ENCODE measurements at regions of chr1 and their contacts with region 1.

Region 1: DNA sequence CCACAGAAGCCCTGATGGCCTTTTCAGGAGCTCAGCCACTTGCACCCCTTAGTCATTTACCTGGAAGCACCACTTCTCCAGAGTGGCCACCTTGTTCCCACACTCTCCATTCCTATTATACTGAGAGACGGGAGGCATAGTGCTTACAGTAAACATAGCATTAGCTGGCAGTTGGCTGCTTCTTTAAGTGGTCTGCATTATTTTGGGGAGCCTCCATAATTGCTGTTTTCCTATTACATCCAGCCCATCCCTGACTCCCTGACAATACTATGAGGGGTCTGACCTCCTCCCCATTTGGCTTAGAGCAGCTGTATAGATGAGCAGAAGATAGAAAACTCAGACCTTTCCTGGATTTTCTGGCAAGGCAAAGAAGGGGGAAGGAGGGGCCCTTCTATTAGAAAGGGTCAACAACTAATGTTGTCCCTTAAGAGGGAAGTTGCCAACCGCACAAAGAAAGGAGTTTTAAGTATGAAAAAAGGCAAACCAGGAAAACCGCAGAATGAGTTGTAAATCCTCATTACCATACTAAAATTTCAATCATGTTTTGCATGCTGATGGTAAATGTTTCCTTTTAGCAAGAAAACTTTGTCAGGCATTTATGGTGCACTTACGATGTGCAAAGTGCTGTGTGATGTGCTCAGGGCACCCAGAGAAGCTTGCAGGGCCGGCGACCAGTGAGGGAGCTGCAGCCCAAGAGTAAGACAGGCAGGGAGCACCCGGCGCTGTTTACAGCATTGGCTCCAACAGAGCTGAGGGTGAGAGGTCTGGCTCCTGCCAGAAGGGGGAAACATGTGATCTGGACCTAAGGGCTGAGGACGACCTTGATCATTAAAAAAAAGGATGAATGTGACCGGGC is 167.3 kb downstream of the ZZZ3 start:
- DNase-seq: peak; percentile 68
- H3K4me3 ChIP-seq: no peak overlapping the region
- H3K27ac ChIP-seq: peak overlapping the region; percentile 74
- H3K4me1 ChIP-seq: peaks cover 32% of the 10 kb centered on the region
- H3K27me3 ChIP-seq: no peaks in the 10 kb centered on the region
- CTCF ChIP-seq: peak in 1 of 2 donors; percentile 24
- POLR2A ChIP-seq: no peak

Region 2: GRCh38 chr1:77219166-77219887 is 295.8 kb before region 1 on chr1 and contains the start of gene PIGK:
- CTCF ChIA-PET with region 1: no interaction called
- POLR2A ChIA-PET with region 1: no interaction called
- dilution Hi-C with region 1: no loop called
- intact Hi-C with region 1: loop called (anchors 5 kb)
- DNase-seq: peak; percentile 92
- H3K4me3 ChIP-seq: peak within 1 kb of the TSS; percentile 68 to 92 (median 83)
- H3K27ac ChIP-seq: peak within 1 kb of the TSS; percentile 38
- H3K4me1 ChIP-seq: peaks cover 19% of the 10 kb centered on the region
- H3K27me3 ChIP-seq: no peaks in the 10 kb centered on the region
- CTCF ChIP-seq: no peak
- POLR2A ChIP-seq: peak; percentile 46
- total RNA-seq, gene PIGK: 27.0 and 32.3 TPM in 2 replicates

Region 3: DNA sequence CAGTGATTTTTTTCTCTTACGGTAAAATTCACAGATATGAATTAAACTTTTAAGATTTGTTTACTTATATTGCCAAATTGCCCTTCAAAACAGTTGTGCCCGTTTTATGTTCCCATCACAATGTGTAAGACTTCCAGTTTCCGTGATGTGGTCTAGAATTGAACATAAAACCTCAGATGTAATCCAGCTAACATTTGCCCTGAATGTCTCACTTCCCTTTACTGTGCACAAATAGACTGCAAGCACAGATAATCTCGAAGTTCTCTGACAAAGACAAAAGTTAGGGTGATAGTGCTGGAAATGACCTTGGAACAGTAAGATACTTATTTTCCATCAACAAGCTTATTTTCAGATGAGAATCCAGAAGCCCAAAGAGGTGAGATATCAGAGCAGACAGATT is 10.2 kb before region 1 on chr1:
- CTCF ChIA-PET with region 1: interaction called, 5 read pairs
- POLR2A ChIA-PET with region 1: interaction called, 3 read pairs
- dilution Hi-C with region 1: no loop called
- intact Hi-C with region 1: loop called (anchors 1 kb)
- DNase-seq: peak; percentile 97
- H3K4me3 ChIP-seq: no peak overlapping the region
- H3K27ac ChIP-seq: peak overlapping the region; percentile 64
- H3K4me1 ChIP-seq: peaks cover 37% of the 10 kb centered on the region
- H3K27me3 ChIP-seq: no peaks in the 10 kb centered on the region
- CTCF ChIP-seq: no peak
- POLR2A ChIP-seq: peak; percentile 44

Measured in endothelial cell of umbilical vein (primary cell).